Sigmoid colon (tissue), 7 donors: ENCODE measurements at regions of chr11 and their contacts with region 1.

Region 1: DNA sequence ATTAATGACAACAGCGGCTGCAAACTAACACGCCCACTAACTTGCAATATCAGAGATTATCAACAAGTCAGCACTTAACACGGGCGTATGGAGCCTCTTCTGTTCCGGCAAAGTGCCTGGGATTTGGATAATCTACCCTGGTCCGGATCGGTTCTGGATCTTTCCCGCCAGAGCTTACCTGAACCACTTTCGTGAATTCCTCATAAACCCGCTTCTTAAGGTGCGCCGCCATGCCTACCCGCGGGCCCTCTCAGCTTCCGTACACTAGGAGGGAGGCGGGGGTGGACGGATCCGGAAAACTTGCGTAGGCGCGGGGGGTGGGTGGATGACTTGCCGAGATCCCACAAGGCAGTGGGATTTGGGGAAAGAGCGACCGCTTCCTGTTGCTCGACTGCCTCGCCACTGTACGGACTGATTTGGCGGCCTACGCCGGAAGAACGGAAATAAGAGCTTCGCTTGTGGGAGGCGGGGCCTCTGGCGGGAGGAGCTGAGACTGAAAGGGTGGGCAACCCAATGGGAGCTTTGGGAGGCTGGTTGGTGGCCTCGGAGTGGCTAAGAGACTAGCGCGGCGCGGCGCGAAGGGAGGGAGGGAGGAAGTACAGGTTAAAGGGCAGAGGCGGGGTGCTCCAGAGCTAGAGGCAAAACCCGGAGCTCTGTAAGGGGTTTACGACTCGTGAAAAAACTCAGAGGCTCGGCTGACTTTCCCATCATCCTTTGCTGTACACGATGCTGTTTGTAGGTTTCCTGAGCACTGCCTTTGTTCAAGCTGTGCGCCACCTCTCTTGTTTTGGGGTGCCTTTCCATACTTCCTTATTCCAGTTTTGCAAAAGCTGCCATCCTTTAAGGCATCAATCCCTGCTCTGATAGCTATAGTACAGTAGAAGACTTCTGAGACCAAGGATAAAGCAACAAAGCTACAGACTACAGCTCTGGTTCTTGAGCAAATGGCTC is at the start of gene INTS4:
- DNase-seq: peak; percentile 100
- H3K4me3 ChIP-seq: peak within 1 kb of the TSS; percentile 60 to 69 (median 63)
- H3K27ac ChIP-seq: peak within 1 kb of the TSS; percentile 80 to 88 (median 84)
- H3K4me1 ChIP-seq: peaks cover 0 to 24% (median 19%) of the 10 kb centered on the region in 4 donors
- H3K27me3 ChIP-seq: no peaks in the 10 kb centered on the region
- CTCF ChIP-seq: no peak
- EP300 ChIP-seq: peak in 2 of 4 donors; percentile 37 to 47
- POLR2A ChIP-seq: no peak
- total RNA-seq, gene INTS4: 26.3 to 32.1 (median 29.8) TPM

Region 2: DNA sequence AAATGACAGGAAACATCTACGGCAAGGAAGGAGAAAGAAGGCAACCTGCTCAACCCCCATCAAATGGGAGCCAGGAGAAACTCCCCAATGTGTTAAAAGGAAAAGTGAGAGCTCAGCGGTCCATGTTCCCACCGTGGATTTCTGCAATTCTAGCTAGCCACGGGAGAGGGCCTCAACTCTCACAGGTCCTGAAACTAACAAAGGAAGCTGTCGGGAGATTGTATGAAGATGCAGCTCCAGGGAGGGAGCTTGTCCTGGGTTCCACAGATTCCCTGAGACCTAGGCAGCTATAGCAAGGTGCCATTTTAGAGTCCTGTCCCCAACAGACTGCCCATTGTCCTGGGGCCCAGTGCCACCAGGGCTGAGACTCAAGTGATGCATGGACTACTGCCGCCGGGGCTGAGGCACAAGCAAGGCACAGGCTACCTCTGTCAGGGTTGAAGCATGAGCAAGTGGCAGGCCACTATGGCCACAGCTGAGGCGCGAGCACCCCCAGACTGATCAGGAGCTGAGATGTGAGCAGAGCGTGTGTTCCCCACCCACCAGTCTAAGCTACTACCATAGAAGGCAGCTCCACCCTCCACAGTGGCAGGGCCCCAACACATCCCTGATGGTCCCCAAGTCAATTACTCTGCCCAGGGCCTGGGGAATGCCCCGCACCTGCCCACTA is 205.5 kb before region 1 on chr11:
- intact Hi-C with region 1: no loop called
- DNase-seq: no peak
- H3K4me3 ChIP-seq: no peak overlapping the region
- H3K27ac ChIP-seq: no peak overlapping the region
- H3K4me1 ChIP-seq: peaks cover 0 to 11% (median 5%) of the 10 kb centered on the region in 4 donors
- H3K27me3 ChIP-seq: no peaks in the 10 kb centered on the region
- CTCF ChIP-seq: no peak
- EP300 ChIP-seq: no peak
- POLR2A ChIP-seq: no peak

Region 3: GRCh38 chr11:78045851-78046485 is 51.3 kb after region 1 on chr11:
- intact Hi-C with region 1: loop called (anchors 1 kb)
- DNase-seq: peak; percentile 91
- H3K4me3 ChIP-seq: peak overlapping the region; percentile 37 to 64 (median 58)
- H3K27ac ChIP-seq: peak overlapping the region; percentile 66 to 81 (median 76)
- H3K4me1 ChIP-seq: peaks cover 0 to 11% (median 7%) of the 10 kb centered on the region in 4 donors
- H3K27me3 ChIP-seq: no peaks in the 10 kb centered on the region
- CTCF ChIP-seq: peak; percentile 85 to 99 (median 94)
- EP300 ChIP-seq: no peak
- POLR2A ChIP-seq: no peak

Region 4: DNA sequence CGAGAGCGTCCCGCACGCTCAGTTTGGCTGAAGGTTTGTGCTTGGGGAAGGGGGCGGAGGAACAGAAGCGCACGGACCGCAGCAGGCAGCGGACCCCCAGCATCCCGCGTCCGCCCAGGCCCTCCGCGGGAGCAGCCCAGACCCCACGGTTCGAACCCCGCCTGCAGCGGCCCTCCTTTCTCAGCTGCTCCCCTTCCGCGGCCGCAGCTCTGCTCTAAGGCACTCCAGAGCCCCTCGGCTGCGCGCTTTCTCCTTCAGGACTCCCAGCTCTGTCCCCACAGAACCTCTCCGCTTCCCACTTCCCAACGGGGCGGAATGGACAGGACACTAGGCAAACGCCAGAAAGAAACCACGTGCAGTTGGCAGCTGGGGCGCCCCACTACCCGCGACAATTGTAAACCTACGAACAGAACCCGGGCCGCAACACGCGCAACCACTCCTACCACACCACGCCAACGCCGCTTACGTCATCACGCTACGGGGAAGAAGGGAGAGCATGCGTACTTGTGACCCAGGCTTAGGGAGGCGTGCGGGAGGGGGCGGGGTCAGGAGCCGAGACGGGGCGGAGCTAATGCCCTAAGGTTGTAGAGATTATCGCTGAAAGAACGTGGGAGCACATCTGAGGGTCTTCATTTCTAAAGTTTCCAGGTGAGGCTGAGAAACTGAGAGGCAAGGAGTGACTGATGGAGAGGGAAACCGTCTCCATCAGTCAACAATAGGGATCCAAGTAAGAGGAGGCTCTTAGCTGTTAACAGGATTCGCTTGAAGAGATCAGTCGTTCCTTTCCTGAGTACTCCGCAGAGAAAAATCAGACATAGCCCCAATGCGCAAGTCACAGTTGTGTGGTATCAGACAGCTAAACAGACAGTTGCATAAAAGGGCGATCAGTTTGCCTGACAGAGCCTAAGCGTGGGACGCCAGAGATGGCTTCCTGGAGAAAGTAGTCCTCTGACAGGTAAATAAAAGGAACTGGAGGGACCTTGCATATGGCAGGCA is 580.0 kb after region 1 on chr11 and contains the start of gene NARS2:
- intact Hi-C with region 1: loop called (anchors 10 kb)
- DNase-seq: peak; percentile 99
- H3K4me3 ChIP-seq: peak within 1 kb of the TSS; percentile 62 to 91 (median 82)
- H3K27ac ChIP-seq: peak within 1 kb of the TSS; percentile 85 to 91 (median 89)
- H3K4me1 ChIP-seq: peaks cover 0 to 20% (median 15%) of the 10 kb centered on the region in 4 donors
- H3K27me3 ChIP-seq: no peaks in the 10 kb centered on the region
- CTCF ChIP-seq: no peak
- EP300 ChIP-seq: no peak
- POLR2A ChIP-seq: peak; percentile 56 to 78
- total RNA-seq, gene NARS2: 7.8 to 15.5 (median 13.6) TPM